ENCODE measurements at regions of chr5 and their contacts with region 1.

Region 1: DNA sequence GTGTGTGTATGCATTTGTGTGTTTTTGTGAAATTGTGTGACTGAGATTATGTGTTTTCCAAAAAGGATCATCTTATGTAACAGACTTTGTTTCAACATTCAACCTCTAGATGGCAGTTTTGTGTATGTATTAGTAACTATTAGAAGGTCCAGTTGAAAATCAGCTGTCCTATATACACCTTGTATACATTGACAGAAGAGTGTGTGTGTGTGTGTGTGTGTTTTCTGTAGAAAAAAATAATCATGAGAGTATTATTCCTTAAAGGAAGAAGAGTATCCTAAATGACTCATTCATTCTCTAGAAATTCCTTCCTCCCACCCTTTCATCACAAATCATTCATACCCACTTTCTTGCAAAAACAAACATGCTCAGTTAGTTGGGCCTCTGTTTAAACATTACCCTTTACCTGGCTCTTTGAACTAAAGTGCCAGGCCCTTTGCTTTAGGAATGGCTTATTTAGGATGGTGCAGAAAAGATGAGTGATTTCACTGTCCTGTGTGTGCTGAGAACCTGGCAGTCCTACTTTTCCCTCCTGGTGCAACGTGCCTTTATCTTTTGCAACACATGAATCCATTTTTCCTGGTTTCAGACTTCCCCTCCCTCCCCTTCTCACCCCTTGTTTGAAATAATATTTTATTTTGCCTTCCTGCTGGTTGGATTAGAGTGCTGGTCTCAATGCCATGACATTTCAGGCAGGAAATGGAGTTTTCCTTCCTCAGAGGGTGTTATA is 152.2 kb downstream of the ARHGAP26 start:
- DNase-seq: no peak
- ATAC-seq: peak in 6 of 8 donors; percentile 41 to 71 (median 58)
- H3K4me3 ChIP-seq: no peak overlapping the region
- H3K27ac ChIP-seq: peak overlapping the region in 9 of 10 donors; percentile 11 to 86 (median 44)
- H3K4me1 ChIP-seq: peaks cover 7 to 66% (median 43%) of the 10 kb centered on the region in 9 donors
- H3K27me3 ChIP-seq: no peaks in the 10 kb centered on the region
- CTCF ChIP-seq: peak in 7 of 9 donors; percentile 44 to 75 (median 60)

Region 2: DNA sequence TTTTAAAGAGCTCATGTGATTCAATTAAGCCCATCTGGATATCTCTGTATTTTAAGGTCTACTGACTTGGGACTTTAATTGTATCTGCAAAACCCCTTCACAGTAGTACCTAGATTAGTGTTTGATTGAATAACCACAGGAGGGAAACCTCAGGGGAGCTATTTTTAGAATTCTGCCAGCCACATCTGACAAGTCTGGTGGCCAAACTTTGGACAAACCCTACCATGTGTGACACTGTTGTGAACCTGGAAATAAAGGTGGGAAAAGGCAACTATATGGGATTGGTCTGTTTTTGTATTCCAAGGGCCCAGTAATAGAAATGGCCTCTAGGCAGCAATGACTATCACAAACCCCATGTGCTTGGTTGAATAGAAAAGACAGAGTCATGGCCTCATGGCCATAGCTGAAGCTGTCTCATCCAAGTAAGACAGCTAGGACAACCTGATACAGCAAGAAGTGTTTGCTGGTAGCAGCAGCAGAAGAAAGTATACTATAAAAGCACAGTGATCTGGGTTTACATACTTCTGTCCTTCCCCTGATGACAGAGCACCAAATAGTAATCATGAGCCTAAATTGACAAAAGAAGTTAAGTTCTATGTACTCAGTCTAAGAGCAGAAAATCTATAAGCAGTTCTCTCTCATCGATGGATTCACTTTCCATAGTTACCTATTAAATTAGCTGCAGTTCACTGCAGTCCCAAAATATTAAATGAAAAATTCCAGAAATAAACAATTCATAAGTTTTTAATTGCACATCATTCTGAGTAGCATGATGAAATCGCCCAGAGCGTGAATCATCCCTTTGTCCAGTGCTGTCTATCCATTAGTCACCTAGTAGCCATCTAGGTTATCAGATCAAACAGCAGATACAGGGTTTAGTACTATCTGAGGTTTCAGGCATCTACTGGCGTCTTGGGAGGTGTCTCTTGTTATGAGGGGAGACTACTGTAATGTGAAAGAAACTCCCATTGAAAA is 37.6 kb after region 1 on chr5:
- intact Hi-C with region 1: loop called in 7 of 10 experiments (anchors 2 to 5 kb)
- DNase-seq: no peak
- ATAC-seq: no peak
- H3K4me3 ChIP-seq: no peak overlapping the region
- H3K27ac ChIP-seq: peak overlapping the region in 2 of 10 donors; percentile 15 to 71
- H3K4me1 ChIP-seq: peaks cover 0 to 76% (median 44%) of the 10 kb centered on the region in 9 donors
- H3K27me3 ChIP-seq: no peaks in the 10 kb centered on the region
- CTCF ChIP-seq: no peak

Region 3: DNA sequence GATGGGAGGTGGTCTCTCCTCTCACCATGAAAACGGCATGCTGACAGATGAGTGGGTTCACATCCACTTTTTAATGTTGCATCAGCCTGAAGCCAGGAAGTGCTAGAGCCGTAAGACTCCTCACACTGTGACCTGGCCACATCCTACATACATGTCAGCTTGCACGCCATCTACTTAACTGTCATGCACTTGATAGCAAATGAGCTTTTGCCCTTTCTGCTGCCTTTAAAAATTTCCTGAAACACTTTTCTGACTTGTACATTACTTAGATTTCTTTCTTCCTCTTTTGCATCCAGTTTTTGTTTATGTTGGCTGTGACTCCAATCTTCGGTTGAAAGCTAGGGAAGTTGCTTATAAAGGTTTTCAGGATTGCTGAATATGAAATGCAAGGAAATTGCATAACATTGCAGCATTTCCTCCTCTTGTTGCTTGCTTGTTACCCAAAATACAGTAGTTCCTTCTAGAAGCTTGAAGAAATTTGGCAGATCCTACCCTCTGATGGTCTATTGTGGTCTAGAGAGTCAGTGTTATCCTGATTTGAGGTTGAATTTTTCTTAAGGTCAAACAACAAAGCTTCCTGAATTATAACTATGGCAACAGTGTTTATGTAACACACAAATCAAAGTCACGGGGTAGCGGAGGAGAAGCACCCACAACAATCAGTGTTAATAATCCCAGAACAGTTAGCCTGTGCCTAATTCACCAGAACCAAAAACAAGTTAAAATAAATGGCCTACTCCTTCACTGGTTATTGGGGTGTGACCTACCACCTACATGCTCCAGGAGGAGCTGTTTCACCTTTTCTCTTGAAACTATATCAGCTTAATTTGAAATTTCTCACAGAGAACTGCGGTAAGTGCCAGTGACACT is 80.3 kb after region 1 on chr5:
- intact Hi-C with region 1: loop called in 1 of 10 experiments (anchors 10 kb)
- DNase-seq: peak in 1 of 2 donors; percentile 51
- ATAC-seq: peak; percentile 79 to 92 (median 84)
- H3K4me3 ChIP-seq: peak overlapping the region in 2 of 10 donors; percentile 11 to 12
- H3K27ac ChIP-seq: peak overlapping the region in 9 of 10 donors; percentile 23 to 90 (median 73)
- H3K4me1 ChIP-seq: peaks cover 10 to 82% (median 59%) of the 10 kb centered on the region in 9 donors
- H3K27me3 ChIP-seq: no peaks in the 10 kb centered on the region
- CTCF ChIP-seq: peak; percentile 8 to 71 (median 55)

Region 4: DNA sequence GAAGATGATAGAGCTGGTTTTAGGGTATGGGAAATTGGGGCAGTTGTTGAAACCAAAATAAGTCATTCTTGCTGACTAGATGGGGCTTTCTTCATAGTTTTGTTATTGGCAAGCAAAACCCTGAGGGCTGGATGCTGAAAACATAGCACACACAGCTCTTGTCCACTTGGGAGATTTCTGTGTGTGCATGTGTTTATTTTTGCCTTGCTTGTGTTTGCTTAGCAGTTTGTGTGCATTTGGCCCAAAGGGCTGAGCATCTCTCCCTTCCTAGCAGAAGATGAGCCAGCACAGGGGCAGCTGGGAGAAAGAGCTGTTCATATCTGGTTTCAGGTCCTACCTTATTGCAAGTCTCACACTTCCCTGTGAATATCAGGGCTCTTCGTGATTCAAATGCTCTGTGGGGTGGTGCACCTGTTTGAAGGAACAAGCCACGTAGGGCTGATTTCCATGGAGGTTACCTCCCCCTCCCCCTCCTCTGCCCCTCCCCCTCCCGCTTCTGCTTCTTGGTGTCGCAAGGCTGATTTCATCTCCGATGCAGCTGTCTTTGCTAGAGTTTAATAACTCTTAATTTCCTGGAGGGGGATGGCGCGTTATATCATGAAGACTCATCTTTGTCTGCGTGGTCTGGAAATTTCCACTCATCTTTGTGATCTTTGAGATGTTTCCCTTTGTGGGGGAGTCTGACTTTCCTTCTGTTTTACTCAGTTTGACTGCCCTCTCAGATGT is 144.3 kb after region 1 on chr5:
- intact Hi-C with region 1: loop called in 1 of 10 experiments (anchors 10 kb)
- DNase-seq: peak in 1 of 2 donors; percentile 43
- ATAC-seq: peak in 4 of 8 donors; percentile 3 to 21 (median 6)
- H3K4me3 ChIP-seq: no peak overlapping the region
- H3K27ac ChIP-seq: peak overlapping the region in 7 of 10 donors; percentile 19 to 85 (median 36)
- H3K4me1 ChIP-seq: peaks cover 9 to 60% (median 54%) of the 10 kb centered on the region in 9 donors
- H3K27me3 ChIP-seq: no peaks in the 10 kb centered on the region
- CTCF ChIP-seq: no peak

Region 5: DNA sequence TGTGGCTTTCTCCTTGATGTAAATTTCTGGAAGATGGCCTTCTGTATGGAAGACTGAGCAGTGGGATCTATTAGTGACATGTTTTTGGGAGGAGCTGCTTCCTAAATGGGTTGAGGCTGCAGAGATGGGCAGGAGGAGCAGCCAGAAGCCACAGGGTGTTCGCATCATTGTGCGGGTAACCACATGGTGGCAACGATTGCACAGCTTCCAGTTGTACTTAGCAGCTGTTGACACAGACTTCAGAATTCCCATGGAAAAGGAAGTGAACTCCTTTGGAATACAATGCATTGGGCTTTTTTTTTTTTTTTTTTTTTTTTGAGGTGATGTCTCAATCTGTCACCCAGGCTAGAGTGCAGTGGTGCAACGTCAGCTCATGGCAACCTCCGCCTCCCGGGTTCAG is 183.8 kb after region 1 on chr5:
- intact Hi-C with region 1: loop called in 1 of 10 experiments (anchors 10 kb)
- DNase-seq: peak; percentile 20 to 51
- ATAC-seq: peak; percentile 67 to 86 (median 77)
- H3K4me3 ChIP-seq: no peak overlapping the region
- H3K27ac ChIP-seq: peak overlapping the region in 1 of 10 donors; percentile 19
- H3K4me1 ChIP-seq: peaks cover 0 to 77% (median 61%) of the 10 kb centered on the region in 9 donors
- H3K27me3 ChIP-seq: no peaks in the 10 kb centered on the region
- CTCF ChIP-seq: peak in 7 of 9 donors; percentile 27 to 60 (median 35)

Region 6: DNA sequence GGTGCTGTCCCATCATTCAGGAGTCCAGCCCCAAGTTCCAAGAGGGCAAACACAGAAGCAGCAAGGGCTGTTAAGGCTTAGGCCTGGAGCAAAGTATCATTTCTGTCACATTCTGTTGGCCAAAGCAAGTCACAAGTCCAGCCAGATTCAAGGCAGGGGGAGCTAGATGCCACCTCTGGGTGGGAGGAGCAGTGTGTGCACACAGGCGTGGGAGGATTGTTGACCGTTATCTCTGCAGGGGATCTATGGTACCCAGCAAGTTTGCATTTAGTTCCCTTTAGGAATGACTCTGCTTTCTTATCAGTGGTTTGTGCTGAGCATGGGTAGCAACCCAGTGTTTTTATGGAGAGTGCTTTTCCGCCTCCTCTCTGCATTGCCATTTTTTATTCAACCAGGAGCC is 202.2 kb after region 1 on chr5:
- intact Hi-C with region 1: no loop called
- DNase-seq: no peak
- ATAC-seq: peak in 1 of 8 donors; percentile 38
- H3K4me3 ChIP-seq: no peak overlapping the region
- H3K27ac ChIP-seq: peak overlapping the region in 1 of 10 donors; percentile 17
- H3K4me1 ChIP-seq: peaks cover 13 to 82% (median 53%) of the 10 kb centered on the region in 9 donors
- H3K27me3 ChIP-seq: no peaks in the 10 kb centered on the region
- CTCF ChIP-seq: no peak

Region 7: DNA sequence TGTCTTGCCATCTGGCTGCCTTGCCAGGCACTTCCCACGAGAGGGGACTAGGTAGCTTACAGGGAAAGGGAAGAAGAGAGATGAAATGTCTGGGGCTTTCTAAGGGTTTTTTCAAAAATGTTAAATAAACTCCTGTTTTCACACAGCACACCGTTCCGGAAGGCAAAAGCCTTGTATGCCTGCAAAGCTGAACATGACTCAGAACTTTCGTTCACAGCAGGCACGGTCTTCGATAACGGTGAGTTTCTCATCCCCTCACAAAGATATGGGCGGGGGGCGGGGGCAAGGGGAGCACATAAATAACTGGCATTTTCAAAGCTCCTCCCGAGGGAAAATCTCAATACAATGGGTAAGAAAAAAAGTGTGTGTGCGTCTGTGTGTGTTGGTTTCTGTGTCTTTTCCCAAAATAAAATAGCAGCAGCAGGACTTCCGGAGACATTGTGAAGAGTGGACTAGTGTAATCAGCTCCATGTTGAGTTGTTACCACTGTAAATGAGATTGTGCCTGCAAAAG is 291.5 kb after region 1 on chr5:
- intact Hi-C with region 1: loop called in 1 of 10 experiments (anchors 10 kb)
- DNase-seq: no peak
- ATAC-seq: peak in 7 of 8 donors; percentile 21 to 77 (median 49)
- H3K4me3 ChIP-seq: no peak overlapping the region
- H3K27ac ChIP-seq: peak overlapping the region in 9 of 10 donors; percentile 9 to 79 (median 66)
- H3K4me1 ChIP-seq: peaks cover 0 to 61% (median 45%) of the 10 kb centered on the region in 9 donors
- H3K27me3 ChIP-seq: no peaks in the 10 kb centered on the region
- CTCF ChIP-seq: no peak

Region 8: DNA sequence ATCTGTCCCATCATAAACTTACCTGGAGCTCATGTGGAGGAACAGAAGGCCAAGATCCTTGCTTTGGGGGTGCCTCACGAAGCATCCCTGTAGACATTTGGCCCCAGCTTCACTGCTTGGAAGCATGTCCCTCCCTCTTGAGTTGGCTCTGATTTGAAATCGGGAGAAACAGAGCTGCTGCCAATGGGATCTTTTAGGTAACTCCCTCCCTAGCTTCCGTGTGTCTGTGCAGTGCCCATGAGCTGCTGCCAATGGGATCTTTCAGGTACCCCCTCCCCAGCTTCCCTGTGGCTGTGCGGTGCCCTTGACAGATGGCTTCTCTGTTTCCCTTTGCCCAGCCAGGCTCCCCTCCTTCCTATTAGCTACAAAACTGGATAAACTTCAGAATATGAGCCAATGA is 303.1 kb after region 1 on chr5:
- intact Hi-C with region 1: no loop called
- DNase-seq: no peak
- ATAC-seq: no peak
- H3K4me3 ChIP-seq: no peak overlapping the region
- H3K27ac ChIP-seq: no peak overlapping the region
- H3K4me1 ChIP-seq: peaks cover 0 to 44% (median 28%) of the 10 kb centered on the region in 9 donors
- H3K27me3 ChIP-seq: no peaks in the 10 kb centered on the region
- CTCF ChIP-seq: no peak

Region 9: GRCh38 chr5:143386725-143387124 is 464.3 kb after region 1 on chr5:
- intact Hi-C with region 1: loop called in 1 of 10 experiments (anchors 10 kb)
- DNase-seq: no peak
- ATAC-seq: no peak
- H3K4me3 ChIP-seq: no peak overlapping the region
- H3K27ac ChIP-seq: peak overlapping the region in 1 of 10 donors; percentile 2
- H3K4me1 ChIP-seq: peaks cover 0 to 62% (median 53%) of the 10 kb centered on the region in 9 donors
- H3K27me3 ChIP-seq: no peaks in the 10 kb centered on the region
- CTCF ChIP-seq: no peak